Panc1 (cell line): ENCODE measurements at regions of chr7 and their contacts with region 1.

Region 1: GRCh38 chr7:130961128-130961601 is 227.2 kb upstream of the KLF14 start:
- DNase-seq: no peak
- ATAC-seq: peak; percentile 90
- H3K4me3 ChIP-seq: peak overlapping the region; percentile 63 to 77
- H3K27ac ChIP-seq: peak overlapping the region; percentile 99
- H3K4me1 ChIP-seq: peaks cover 36% of the 10 kb centered on the region
- H3K27me3 ChIP-seq: no peaks in the 10 kb centered on the region
- CTCF ChIP-seq: no peak

Region 2: GRCh38 chr7:130865408-130866236 is 95.5 kb before region 1 on chr7:
- CTCF ChIA-PET with region 1: no interaction called
- POLR2A ChIA-PET with region 1: no interaction called
- in situ Hi-C with region 1: no loop called
- intact Hi-C with region 1: no loop called
- DNase-seq: no peak
- ATAC-seq: peak; percentile 53
- H3K4me3 ChIP-seq: no peak overlapping the region
- H3K27ac ChIP-seq: no peak overlapping the region
- H3K4me1 ChIP-seq: no peaks in the 10 kb centered on the region
- H3K27me3 ChIP-seq: no peaks in the 10 kb centered on the region
- CTCF ChIP-seq: no peak; the same call in 1 of the 2 replicates

Region 3: GRCh38 chr7:130929896-130930659 is 31.1 kb before region 1 on chr7:
- CTCF ChIA-PET with region 1: interaction called, 13 read pairs
- POLR2A ChIA-PET with region 1: no interaction called
- in situ Hi-C with region 1: no loop called
- intact Hi-C with region 1: no loop called
- DNase-seq: no peak
- ATAC-seq: no peak
- H3K4me3 ChIP-seq: no peak overlapping the region
- H3K27ac ChIP-seq: peak overlapping the region; percentile 100
- H3K4me1 ChIP-seq: peaks cover 84% of the 10 kb centered on the region
- H3K27me3 ChIP-seq: no peaks in the 10 kb centered on the region
- CTCF ChIP-seq: no peak

Region 4: DNA sequence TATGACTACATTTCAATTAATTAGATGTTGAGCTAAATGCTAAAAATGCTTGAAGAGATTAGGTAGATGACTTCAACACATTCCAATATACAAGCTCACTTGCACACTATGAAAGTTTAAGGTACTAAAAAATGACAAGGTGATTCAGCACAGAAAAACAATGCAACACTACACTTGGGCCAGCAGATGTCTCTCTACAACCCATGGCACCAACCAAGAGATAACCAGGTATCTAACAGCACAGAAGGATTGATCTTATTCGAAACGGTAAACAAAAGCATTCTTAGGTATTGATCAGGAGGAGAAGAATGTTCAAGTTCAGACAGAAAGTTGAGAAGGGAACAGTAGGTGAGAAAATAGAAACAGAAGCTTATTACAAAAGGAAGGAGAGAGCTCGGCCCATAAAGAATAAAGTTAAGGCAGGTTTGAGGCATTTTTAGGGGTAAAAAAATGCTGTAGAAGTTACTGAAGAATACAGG is 21.0 kb after region 1 on chr7:
- CTCF ChIA-PET with region 1: interaction called, 3 read pairs
- POLR2A ChIA-PET with region 1: interaction called, 14 read pairs
- in situ Hi-C with region 1: no loop called
- intact Hi-C with region 1: no loop called
- DNase-seq: no peak
- ATAC-seq: peak; percentile 88
- H3K4me3 ChIP-seq: no peak overlapping the region
- H3K27ac ChIP-seq: no peak overlapping the region
- H3K4me1 ChIP-seq: no peaks in the 10 kb centered on the region; the same call in 1 of the 2 replicates
- H3K27me3 ChIP-seq: no peaks in the 10 kb centered on the region
- CTCF ChIP-seq: peak; percentile 81; the same call in 1 of the 2 replicates

Region 5: DNA sequence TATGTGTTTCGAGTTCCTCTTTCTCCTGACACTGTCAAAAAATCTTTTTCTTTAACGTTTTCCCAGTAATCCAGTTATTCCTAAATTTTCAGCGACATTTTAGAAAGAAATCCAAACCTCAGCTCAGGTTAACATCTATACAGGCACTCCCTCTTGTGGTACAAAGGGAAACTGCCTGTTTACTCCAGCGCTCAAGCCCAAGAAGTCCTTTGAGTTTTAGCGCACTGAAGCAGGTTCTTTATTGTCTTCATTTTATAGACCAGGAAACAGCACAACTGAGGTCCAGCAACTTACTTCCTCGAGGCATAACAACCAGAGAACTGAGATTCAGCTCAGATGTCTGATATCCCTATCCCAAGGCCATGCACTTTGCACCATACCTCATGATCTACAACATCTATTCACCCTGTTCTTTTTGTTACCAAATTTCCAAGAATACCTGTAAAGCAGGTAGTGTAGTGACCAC is 79.3 kb after region 1 on chr7:
- CTCF ChIA-PET with region 1: interaction called, 6 read pairs
- POLR2A ChIA-PET with region 1: no interaction called
- in situ Hi-C with region 1: no loop called
- intact Hi-C with region 1: loop called (anchors 5 kb)
- DNase-seq: peak; percentile 74
- ATAC-seq: peak; percentile 92
- H3K4me3 ChIP-seq: no peak overlapping the region
- H3K27ac ChIP-seq: peak overlapping the region; percentile 41; the same call in 1 of the 2 replicates
- H3K4me1 ChIP-seq: peaks cover 6% of the 10 kb centered on the region; the same call in 1 of the 2 replicates
- H3K27me3 ChIP-seq: no peaks in the 10 kb centered on the region
- CTCF ChIP-seq: peak; percentile 90

Region 6: DNA sequence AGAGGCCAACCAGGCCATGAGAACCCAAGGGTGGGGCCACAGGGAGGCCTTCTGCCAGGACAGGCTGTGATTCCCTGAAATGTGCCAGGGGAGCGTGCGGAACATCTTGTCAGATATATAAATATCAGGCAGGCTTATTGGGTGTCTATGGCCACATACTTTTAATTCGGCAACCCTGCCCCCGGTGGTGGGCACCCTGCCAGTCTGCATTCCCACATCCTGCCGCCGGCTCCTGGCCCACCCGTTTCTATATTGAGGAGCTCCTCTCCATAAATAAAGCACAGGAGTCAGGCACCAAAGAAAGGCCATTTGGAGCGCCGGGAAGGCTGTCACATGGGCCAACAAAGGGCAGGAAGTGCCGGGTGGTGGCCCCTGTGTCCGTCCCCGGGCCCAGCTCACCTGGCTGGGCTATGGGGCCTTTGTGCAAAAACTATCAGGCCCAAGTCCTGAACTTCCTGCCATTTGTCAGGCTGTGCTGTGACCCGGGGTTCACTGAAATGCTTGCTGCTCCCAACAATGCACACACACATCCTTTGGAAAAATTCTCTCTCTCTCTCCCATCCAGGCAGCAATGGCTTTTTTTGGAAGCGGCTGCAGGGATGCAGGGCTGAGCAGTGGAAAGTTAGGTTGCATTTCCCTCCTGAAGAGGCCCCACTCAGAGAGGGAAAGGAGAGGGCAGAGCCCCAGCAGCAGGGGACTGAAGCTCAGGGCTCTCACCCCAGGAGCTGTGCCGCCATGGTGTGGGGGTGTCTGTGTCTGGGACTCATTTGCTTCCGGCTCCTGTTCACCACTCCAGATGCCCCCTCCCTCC is 620.3 kb after region 1 on chr7:
- CTCF ChIA-PET with region 1: no interaction called
- POLR2A ChIA-PET with region 1: no interaction called
- in situ Hi-C with region 1: no loop called
- intact Hi-C with region 1: no loop called
- DNase-seq: no peak
- ATAC-seq: no peak
- H3K4me3 ChIP-seq: no peak overlapping the region
- H3K27ac ChIP-seq: no peak overlapping the region
- H3K4me1 ChIP-seq: no peaks in the 10 kb centered on the region
- H3K27me3 ChIP-seq: no peaks in the 10 kb centered on the region
- CTCF ChIP-seq: no peak